Activated CD4-positive, alpha-beta T cell treated with anti-CD3 and anti-CD28 coated beads for 36 hours (primary cell): ENCODE measurements at regions of chr12 and their contacts with region 1.

Region 1: DNA sequence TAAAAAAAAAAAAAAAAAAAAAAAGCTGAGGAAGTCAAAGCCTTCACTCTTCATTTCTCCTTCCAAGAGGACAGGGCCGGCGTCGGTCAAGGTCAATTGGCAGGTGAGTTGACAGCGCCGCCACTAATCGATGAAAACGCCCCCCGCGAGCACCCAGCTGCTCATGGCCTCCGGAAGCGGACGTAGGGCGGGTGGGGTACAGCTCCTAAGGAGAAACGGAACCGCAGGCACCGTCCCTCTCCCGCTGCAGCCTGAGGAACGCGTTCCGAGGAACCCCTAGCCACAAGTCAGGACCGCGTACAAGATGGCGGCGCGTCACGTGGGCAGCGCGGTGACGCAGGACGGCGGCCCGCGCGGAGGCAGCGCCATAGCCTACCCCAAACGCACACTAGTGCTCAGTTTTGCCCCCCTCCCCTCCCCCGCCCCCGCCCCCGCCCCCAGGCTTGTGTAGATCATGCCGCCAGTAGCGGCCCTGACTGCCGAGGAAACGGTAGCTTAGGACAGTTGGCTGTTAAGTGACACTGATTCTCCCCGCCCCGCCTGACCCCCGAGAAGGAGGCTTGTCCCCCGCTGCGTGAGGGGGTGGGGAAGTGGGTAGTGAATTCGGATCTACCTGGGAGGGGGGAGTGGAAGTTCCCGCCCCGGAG is at the start of gene ATF1:
- DNase-seq: peak; percentile 94
- ATAC-seq: peak; percentile 89
- H3K4me3 Mint-ChIP-seq: peak within 1 kb of the TSS; percentile 95
- H3K27ac Mint-ChIP-seq: peak within 1 kb of the TSS; percentile 97
- H3K4me1 Mint-ChIP-seq: peaks cover 38% of the 10 kb centered on the region
- H3K27me3 Mint-ChIP-seq: no peaks in the 10 kb centered on the region
- total RNA-seq, gene ATF1: 53.0 to 67.3 TPM

Region 2: DNA sequence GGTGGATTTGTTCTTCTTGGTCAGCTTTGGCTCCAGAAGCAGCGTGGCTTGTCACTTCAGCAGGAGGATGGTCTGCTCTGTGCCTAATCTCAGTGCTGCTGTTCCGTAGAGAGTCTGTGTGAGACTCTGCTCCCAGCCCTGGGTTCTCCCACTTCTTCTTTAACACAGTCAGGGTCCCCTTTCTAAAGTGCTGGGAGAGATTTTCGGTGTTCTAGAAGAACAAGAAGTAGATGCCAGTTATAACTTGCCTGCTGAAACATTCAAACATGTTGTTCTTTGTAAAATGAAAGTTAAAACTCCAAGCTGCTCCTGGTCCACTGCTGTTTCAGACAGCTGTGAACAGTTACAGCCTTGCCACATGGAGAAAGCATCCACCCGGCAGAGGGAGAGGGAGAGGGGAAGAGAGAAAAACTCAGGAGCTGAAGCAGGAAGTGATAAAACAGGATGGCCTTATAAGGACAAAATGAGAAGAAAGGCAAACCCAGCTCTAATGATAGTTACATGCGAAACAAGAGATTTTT is 541.4 kb before region 1 on chr12:
- CTCF ChIA-PET with region 1: no interaction called
- POLR2A ChIA-PET with region 1: no interaction called
- intact Hi-C with region 1: loop called in 1 of 2 experiments (anchors 5 kb)
- DNase-seq: peak; percentile 48
- ATAC-seq: peak; percentile 21
- H3K4me3 Mint-ChIP-seq: no peak overlapping the region
- H3K27ac Mint-ChIP-seq: no peak overlapping the region
- H3K4me1 Mint-ChIP-seq: peaks cover 40% of the 10 kb centered on the region
- H3K27me3 Mint-ChIP-seq: no peaks in the 10 kb centered on the region

Region 3: DNA sequence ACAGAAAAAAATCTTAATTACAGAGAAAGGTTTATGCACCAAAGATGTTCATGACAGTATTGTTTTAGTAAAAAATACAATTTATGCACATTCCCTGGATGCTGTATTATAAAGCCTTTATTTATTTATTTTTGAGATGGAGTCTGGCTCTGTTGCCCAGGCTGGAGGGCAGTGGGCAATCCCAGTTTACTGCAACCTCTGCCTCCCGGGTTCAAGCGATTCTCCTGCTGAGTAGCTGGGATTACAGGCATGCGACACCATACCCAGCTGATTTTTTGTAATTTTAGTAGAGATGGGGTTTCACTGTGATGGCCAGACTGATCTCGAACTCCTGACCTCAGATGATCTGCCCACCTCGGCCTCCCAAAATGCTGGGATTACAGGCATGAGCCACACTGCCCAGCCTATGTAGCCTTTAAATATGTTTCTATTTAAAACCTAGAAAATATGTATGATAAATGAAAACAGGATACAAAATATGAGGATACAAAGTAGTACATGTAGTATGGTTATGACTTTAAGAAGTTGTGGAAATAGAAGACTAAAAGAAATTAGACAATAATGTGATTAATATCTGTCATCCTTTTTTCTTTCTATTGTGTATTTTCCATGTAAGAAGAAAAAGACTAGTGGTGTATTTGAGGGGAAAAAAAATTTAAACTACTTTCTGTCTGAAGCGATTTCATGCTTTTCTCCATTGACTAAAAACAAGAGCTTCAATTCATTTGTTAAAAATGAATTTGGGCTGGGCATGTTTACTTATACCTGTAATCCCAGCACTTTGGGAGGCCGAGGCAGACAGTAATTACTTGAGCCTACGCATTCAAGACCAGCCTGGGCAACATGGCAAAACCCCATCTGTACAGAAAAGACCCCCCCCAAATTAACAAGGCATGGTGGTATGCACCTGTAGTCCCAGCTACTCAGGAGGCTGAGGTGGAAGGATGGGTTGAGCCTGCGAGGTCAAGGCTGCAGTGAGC is 13.3 kb after region 1 on chr12:
- CTCF ChIA-PET with region 1: interaction called, 26 read pairs
- POLR2A ChIA-PET with region 1: interaction called, 4 read pairs
- intact Hi-C with region 1: no loop called
- DNase-seq: peak; percentile 20
- ATAC-seq: peak; percentile 76
- H3K4me3 Mint-ChIP-seq: no peak overlapping the region
- H3K27ac Mint-ChIP-seq: peak overlapping the region; percentile 51
- H3K4me1 Mint-ChIP-seq: peaks cover 43% of the 10 kb centered on the region
- H3K27me3 Mint-ChIP-seq: no peaks in the 10 kb centered on the region

Region 4: DNA sequence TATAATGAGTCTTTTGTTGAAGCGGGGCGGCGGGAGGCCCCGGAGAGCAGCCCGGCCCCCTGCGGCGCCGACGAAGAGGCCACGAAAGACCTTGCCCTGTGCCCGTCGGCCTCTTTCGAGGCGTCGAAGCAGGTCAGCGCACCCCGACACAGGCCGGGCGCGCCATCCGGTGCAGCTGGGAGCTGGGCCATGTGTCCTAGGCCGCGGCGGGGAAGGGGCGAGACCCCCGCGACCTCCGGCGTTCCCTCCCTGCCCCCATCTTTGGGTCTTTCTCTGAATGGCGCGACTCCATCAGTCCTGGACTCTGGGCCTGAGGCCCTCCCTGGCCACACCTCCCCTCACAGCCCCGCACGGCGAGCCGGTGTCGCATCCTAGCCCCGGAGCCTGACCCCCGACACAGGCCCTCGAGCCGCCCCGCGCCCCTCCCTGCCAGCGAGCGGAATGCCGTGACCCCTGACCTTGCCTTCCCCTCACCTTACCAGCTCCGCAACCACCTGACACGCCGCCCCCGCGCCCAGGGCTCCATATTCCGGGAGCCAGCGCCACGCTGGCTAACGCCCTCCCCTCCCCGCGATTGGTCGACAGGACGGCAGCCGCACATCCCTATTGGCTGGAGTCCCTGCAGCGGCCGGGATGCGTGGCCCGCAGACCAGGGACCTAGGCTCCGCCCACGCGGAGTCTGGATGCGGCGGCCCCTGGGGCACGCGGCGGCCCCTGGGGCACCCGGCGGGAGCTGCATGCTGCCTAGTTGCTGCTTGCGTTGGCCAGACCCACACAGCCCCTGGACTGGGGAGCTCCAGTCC is 262.3 kb after region 1 on chr12 and contains the start of gene SLC11A2:
- CTCF ChIA-PET with region 1: interaction called, 7 read pairs
- POLR2A ChIA-PET with region 1: interaction called, 22 read pairs
- intact Hi-C with region 1: loop called (anchors 1 kb)
- DNase-seq: peak; percentile 97
- ATAC-seq: peak; percentile 88
- H3K4me3 Mint-ChIP-seq: peak within 1 kb of the TSS; percentile 93
- H3K27ac Mint-ChIP-seq: peak within 1 kb of the TSS; percentile 98
- H3K4me1 Mint-ChIP-seq: peaks cover 55% of the 10 kb centered on the region
- H3K27me3 Mint-ChIP-seq: no peaks in the 10 kb centered on the region
- total RNA-seq, gene SLC11A2: 31.0 to 32.9 TPM

Region 5: DNA sequence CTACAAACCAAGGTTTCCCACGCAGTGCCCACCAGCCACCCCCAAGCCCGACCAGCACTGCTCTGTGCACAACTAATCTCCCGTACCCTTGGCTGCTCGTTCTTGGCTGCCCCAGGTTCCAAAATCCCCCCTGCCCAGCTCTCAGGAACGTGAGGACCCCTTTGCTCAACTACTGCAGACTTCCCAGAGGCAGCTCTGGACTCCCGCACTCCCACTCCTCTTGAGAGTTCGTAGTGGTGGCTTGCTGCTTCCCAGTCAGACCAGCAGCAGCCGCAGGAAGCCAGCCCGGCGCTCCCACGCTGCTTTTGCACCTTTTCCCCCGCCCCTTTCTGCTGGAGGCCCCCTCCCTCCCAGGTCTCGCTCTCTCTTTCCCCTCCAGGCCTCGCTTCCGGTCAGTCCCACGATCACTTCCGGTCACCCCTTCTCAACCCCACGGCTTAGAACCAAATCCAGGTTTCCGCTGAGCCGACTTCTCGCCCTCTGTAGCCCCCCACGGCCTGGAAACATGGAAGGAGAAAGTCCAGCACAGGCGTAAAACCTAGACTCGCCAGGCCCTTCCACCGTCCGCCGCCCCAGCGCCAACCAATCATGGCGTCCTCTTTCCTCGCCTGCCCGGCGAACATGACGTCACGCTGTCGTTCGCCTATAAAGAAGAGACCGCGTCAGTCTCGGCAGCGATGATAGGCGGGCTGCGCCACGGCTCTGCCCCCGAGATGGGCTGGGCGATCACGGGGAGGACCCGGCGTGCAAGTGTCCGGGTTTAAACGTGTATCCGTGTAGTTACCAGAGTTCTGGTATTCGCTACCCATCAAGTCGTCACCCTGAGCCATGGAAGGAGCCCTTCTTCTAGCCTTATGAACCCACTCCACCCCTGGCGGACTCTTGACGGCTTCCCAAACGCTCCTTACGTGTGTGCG is 409.0 kb after region 1 on chr12 and contains the start of gene TFCP2:
- CTCF ChIA-PET with region 1: no interaction called
- POLR2A ChIA-PET with region 1: no interaction called
- intact Hi-C with region 1: loop called in 1 of 2 experiments (anchors 1 kb)
- DNase-seq: peak; percentile 97
- ATAC-seq: peak; percentile 99
- H3K4me3 Mint-ChIP-seq: no peak within 1 kb of the TSS
- H3K27ac Mint-ChIP-seq: peak within 1 kb of the TSS; percentile 78
- H3K4me1 Mint-ChIP-seq: peaks cover 10% of the 10 kb centered on the region
- H3K27me3 Mint-ChIP-seq: no peaks in the 10 kb centered on the region
- total RNA-seq, gene TFCP2: 39.5 to 47.3 TPM

Region 6: GRCh38 chr12:51326762-51327439 is 563.1 kb after region 1 on chr12:
- CTCF ChIA-PET with region 1: interaction called, 5 read pairs
- POLR2A ChIA-PET with region 1: interaction called, 10 read pairs
- intact Hi-C with region 1: loop called in 1 of 2 experiments (anchors 2 kb)
- DNase-seq: no peak
- ATAC-seq: peak; percentile 18
- H3K4me3 Mint-ChIP-seq: peak overlapping the region; percentile 49
- H3K27ac Mint-ChIP-seq: peak overlapping the region; percentile 88
- H3K4me1 Mint-ChIP-seq: peaks cover 68% of the 10 kb centered on the region
- H3K27me3 Mint-ChIP-seq: no peaks in the 10 kb centered on the region